ENCODE measurements at regions of chr2 and their contacts with region 1.

Region 1: GRCh38 chr2:156470975-156471583 is 34.9 kb downstream of the GPD2 start:
- DNase-seq: no peak
- H3K4me3 ChIP-seq: no peak overlapping the region
- H3K27ac ChIP-seq: peak overlapping the region in 1 of 2 donors; percentile 51
- H3K4me1 ChIP-seq: peaks cover 0 to 20% of the 10 kb centered on the region in 2 donors
- H3K27me3 ChIP-seq: no peaks in the 10 kb centered on the region
- CTCF ChIP-seq: no peak
- POLR2A ChIP-seq: no peak

Region 2: DNA sequence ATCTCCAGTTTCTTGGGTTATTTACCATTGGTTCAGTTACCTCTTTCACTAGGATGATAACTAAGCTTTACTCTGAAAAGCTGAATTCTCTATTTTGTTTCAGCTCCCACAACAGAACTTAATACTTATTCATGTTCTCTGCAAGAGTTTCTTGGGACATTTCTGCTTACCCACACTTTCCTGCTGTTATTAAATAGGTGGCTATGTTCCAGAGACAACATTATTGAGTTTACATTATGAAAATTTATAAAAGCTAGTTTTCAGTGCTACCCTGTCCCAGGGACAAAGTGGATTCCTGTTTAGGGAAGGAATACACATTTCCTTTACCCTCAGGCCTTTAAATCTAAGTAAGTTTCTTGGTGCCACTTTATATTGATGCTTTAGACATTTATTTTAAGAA is 41.9 kb before region 1 on chr2:
- intact Hi-C with region 1: loop called (anchors 2 kb)
- DNase-seq: no peak
- H3K4me3 ChIP-seq: no peak overlapping the region
- H3K27ac ChIP-seq: peak overlapping the region in 1 of 2 donors; percentile 23
- H3K4me1 ChIP-seq: peaks cover 0 to 13% of the 10 kb centered on the region in 2 donors
- H3K27me3 ChIP-seq: no peaks in the 10 kb centered on the region
- CTCF ChIP-seq: no peak
- POLR2A ChIP-seq: no peak